PC-9 (cell line): ENCODE measurements at regions of chr12 and their contacts with region 1.

Region 1: GRCh38 chr12:63450816-63451215 is 217.5 kb downstream of the DPY19L2 start:
- DNase-seq: no peak
- H3K4me3 ChIP-seq: no peak overlapping the region
- H3K27ac ChIP-seq: no peak overlapping the region
- H3K4me1 ChIP-seq: no peaks in the 10 kb centered on the region
- H3K27me3 ChIP-seq: no peaks in the 10 kb centered on the region
- CTCF ChIP-seq: no peak

Region 2: DNA sequence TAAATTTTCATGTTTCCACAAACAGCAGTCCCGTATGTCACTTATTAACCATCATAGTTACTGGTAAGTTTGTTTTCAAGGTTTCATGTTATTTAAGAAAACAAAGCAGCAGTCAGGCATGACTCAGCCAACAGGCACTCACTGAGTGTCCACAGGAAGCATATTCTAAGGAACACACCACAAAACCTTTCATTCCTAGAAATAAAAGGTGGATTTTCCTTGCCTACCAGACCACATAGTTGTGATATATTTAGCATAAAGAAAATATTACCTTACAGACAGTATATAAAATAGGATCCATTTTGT is 156.5 kb before region 1 on chr12:
- CTCF ChIA-PET with region 1: no interaction called
- POLR2A ChIA-PET with region 1: interaction called, 15 read pairs
- intact Hi-C with region 1: no loop called
- DNase-seq: peak; percentile 33 to 38
- H3K4me3 ChIP-seq: no peak overlapping the region
- H3K27ac ChIP-seq: no peak overlapping the region
- H3K4me1 ChIP-seq: 0 out of 2 replicates have a peak, but pooled peaks cover 9% of the 10 kb centered on the region
- H3K27me3 ChIP-seq: no peaks in the 10 kb centered on the region
- CTCF ChIP-seq: no peak

Region 3: DNA sequence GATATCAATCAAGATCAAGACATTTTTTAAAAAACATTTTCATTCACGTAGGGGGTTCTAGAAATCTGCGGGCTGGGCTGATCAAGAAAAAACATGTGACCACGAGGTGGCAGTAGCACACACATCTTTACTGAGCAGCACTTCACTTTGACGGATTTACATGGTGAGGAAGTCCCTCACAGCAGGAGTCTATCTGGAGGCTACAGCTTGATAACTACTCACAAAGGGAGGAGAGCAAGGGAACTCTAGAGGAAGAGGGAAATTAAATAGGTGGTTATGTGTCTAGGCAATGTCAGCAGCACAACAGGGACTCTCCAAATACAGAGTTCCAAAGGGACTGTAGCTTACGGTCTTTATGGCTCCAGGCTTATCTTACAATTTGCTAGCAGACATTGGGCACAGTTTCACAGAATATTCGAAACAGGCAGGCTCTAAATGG is 30.6 kb before region 1 on chr12:
- CTCF ChIA-PET with region 1: no interaction called
- POLR2A ChIA-PET with region 1: no interaction called
- intact Hi-C with region 1: no loop called
- DNase-seq: peak; percentile 23 to 52
- H3K4me3 ChIP-seq: no peak overlapping the region
- H3K27ac ChIP-seq: no peak overlapping the region
- H3K4me1 ChIP-seq: no peaks in the 10 kb centered on the region
- H3K27me3 ChIP-seq: no peaks in the 10 kb centered on the region
- CTCF ChIP-seq: peak; percentile 69

Region 4: GRCh38 chr12:63470161-63470560 is 19.3 kb after region 1 on chr12:
- CTCF ChIA-PET with region 1: no interaction called
- POLR2A ChIA-PET with region 1: no interaction called
- intact Hi-C with region 1: no loop called
- DNase-seq: no peak
- H3K4me3 ChIP-seq: no peak overlapping the region
- H3K27ac ChIP-seq: no peak overlapping the region
- H3K4me1 ChIP-seq: no peaks in the 10 kb centered on the region
- H3K27me3 ChIP-seq: no peaks in the 10 kb centered on the region
- CTCF ChIP-seq: no peak

Region 5: DNA sequence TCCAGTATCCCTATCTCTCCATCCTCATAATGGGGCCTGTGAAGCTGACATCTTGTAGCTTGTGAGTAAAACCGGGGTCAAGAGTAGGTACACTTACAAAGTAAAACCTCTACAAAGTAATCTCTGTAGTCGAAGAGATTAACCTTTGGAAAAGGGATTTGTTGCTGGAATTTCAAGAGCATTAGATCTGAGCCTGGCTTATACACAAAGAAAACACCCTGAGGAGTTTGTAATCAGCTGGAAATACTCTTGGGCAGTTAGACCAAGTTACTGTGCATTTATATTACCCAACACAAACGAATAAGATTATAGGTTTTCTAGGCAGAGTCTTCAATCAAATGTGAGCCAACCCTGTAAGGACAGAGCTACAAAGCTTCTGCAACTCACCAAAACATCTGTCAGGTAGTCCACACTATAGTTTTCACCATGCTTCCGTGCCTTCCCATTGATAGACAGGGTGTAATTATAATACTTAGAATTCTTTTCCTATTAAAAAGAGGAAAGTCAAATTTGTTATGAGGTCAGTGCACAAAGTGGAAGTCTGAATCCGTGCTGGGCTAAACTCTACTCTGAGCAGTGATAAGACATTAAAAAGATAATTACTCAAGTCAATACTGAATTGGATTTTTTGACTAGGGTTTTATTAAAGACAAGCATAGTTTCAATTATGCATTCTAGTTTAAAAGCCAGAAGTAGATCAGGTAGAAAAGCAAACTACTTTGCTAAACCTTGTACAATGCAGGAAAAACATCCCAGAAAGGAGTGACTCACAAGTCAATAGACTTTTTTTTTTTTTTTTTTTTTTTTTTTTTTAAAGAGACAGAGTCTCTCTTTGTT is 1293.8 kb after region 1 on chr12:
- CTCF ChIA-PET with region 1: no interaction called
- POLR2A ChIA-PET with region 1: interaction called, 22 read pairs
- intact Hi-C with region 1: no loop called
- DNase-seq: peak in 1 of 2 experiments; percentile 64
- H3K4me3 ChIP-seq: peak overlapping the region; percentile 34; the same call in 1 of the 2 replicates
- H3K27ac ChIP-seq: peak overlapping the region; percentile 62
- H3K4me1 ChIP-seq: peaks cover 30% of the 10 kb centered on the region
- H3K27me3 ChIP-seq: no peaks in the 10 kb centered on the region
- CTCF ChIP-seq: no peak